Head of caudate nucleus (tissue), 42 donors: ENCODE measurements at regions of chr11 and their contacts with region 1.

Region 1: GRCh38 chr11:69642913-69643632 is 2.1 kb downstream of the CCND1 start:
- DNase-seq: peak; percentile 31 to 90 (median 77)

Region 2: GRCh38 chr11:69101115-69101791 is 541.8 kb before region 1 on chr11:
- intact Hi-C with region 1: loop called (anchors 1 kb)
- DNase-seq: peak; percentile 42 to 88 (median 77)

Region 3: DNA sequence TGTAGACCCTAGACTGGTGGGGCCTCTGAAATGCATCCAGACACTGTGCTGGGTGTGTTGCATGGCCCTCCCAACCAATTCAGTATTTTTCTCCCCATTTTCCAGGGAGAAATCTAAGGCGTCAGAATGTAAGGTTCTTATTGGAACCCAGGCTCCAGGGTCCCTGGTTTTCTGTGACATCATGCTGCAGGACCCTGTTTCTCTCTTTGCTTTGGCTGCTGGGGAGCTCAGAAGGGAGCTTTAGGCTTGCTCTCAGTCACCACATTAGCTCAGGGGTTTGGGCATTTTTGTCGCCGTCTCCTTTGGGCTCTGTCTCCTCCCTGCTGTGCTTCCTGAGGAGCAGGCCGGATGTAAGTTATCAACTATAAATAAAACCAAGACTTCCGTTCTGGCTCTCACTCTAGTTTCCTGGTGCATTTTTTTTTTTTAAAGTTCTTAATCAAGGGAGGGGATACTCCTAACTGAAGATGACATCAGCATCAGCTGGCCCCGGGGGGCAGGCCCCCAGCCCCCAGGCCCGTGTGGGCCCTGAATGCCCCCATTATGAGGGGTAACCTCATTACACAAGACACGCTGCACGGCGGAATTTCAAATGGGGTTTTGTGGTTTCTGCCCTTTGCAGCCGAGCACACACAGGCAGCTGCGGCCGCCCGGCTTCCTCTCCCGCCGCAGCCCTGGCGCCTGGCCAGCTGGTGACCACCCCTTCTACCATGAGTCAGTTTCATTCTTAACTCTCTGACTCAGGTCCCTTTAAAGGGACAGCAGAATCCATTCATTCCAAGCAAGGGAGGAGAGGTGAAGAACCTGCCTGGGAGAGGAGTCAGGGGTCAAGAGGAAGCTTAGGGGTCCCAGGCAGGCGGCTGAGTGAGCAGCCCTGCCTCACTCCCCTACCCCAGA is 345.9 kb before region 1 on chr11:
- intact Hi-C with region 1: loop called (anchors 10 kb)
- DNase-seq: peak in 40 of 42 donors; percentile 29 to 80 (median 58)

Region 4: DNA sequence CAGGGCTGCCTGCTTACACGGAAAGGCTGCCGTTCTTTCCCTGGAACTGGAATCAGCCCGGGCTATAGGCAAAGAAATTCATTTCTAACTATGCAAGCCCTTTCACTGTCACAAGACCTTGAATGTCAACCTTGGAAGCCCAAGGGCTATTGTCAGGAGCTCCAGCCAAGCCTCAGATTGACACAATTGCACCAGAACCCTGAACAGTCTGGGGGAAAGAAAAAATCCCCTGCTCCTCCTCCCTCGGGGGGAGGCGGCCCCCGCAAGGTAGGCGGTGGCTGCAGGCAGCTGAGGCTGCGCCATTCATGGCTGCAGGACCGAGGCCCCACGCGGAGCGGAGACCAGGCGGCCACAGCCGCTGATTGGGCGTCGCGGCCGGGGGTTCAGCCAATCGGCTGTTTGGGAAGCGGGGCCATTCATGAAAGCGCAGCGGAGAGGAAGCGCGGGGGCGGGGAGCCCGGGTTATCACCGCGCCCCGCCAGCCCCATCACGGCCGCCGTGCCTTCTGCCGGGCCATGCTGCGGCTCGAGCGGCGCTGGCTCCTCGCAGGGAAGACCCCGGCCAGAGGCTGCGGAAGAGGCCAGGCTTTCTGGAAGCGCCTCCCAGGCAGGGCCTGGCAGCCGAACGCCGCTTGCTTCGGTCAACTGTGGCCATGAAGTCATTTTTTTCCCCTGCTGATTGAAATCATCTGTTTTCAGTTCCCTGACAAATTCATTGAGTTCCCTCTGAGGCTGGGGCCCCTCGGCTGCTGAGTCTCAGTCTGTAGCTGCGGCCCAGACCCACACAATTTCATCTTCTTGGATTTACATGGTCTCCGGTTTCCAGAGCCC is 199.7 kb before region 1 on chr11:
- intact Hi-C with region 1: loop called (anchors 10 kb)
- DNase-seq: peak; percentile 57 to 93 (median 85)

Region 5: DNA sequence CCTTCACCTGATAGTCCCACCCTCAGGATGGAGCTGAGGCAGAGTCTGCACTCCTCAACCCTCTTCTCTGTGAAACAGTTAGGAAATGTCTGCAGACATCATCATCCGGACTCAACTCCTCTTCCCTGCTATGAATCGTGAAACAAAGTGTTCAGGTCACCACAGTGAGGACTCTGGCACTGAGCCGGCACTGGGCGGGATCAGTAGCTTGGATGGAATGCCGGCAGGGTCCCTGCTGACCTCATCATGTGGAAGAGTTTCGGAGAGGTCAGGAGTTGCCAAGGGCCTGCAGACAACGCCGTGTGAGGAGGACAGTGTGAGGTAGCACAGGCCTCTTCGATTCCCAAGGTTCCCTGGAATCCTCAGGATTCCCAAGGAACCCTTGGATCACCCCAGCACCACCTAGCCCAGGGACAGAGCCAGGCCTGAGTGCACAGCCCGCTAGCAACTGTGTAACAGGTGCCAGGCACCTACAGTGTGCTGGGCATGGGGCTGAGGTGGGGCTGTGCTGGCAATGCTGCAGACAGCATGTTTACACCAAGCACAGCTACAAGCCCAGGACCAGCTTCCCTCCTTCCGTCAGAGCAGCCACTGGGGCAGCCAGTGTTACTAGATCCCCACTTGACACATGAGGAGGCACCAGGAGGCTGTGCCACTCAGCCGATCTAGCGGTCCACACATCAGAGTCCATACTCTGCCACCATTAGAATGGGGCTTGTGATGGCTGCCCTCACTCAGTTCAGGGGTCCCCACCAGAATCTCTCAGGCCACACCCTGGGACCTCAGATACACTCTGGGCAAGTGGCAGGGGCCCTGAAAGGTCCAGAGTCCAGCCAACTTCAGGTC is 162.3 kb before region 1 on chr11:
- intact Hi-C with region 1: no loop called
- DNase-seq: no peak